Common myeloid progenitor, CD34-positive (primary cell): ENCODE measurements at regions of chr17 and their contacts with region 1.

Region 1: DNA sequence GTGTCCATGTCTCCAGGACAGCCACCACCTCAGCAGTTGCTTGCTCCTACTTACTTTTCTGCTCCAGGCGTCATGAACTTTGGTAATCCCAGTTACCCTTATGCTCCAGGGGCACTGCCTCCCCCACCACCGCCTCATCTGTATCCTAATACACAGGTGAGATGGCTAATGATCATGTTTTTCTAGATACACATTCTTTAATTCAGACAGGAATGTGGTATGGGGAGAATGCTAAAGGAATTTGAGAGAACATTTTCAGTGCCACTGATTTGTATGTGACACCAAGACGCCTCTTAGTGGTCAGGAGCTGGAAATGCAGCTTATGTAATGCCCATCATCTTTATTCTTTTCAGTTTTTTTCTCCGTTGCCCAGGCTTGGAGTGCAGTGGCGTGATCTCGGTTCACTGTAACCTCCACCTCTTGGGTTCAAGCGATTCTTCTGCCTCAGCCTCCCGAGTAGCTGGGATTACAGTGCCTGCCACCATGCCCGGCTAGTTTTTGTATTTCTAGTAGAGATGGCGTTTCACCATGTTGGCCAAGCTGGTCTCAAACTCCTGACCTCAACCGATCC is 8.9 kb upstream of the RAPGEFL1 start:
- DNase-seq: peak; percentile 60 to 78 (median 74)
- H3K4me3 ChIP-seq: no peak overlapping the region
- H3K27ac ChIP-seq: no peak overlapping the region
- H3K4me1 ChIP-seq: no peaks in the 10 kb centered on the region
- H3K27me3 ChIP-seq: no peaks in the 10 kb centered on the region

Region 2: GRCh38 chr17:40157973-40158372 is 10.4 kb before region 1 on chr17:
- CTCF ChIA-PET with region 1: interaction called, 14 read pairs
- POLR2A ChIA-PET with region 1: no interaction called
- DNase-seq: peak in 2 of 3 donors; percentile 16 to 33
- H3K4me3 ChIP-seq: no peak overlapping the region
- H3K27ac ChIP-seq: no peak overlapping the region
- H3K4me1 ChIP-seq: peaks cover 0 to 15% (median 7%) of the 10 kb centered on the region in 4 experiments
- H3K27me3 ChIP-seq: no peaks in the 10 kb centered on the region

Region 3: GRCh38 chr17:40480501-40481003 is 312.2 kb after region 1 on chr17:
- CTCF ChIA-PET with region 1: no interaction called
- POLR2A ChIA-PET with region 1: no interaction called
- DNase-seq: peak; percentile 50 to 81 (median 76)
- H3K4me3 ChIP-seq: peak overlapping the region in 1 of 7 experiments; percentile 7
- H3K27ac ChIP-seq: no peak overlapping the region
- H3K4me1 ChIP-seq: peaks cover 3 to 22% (median 15%) of the 10 kb centered on the region in 4 experiments
- H3K27me3 ChIP-seq: no peaks in the 10 kb centered on the region